Breast epithelium (tissue), 4 donors: ENCODE measurements at regions of chr11 and their contacts with region 1.

Region 1: GRCh38 chr11:132685174-132685611 is 847.1 kb downstream of the OPCML start:
- DNase-seq: no peak
- H3K4me3 ChIP-seq: no peak overlapping the region
- H3K27ac ChIP-seq: no peak overlapping the region
- H3K4me1 ChIP-seq: no peaks in the 10 kb centered on the region
- H3K27me3 ChIP-seq: no peaks in the 10 kb centered on the region
- CTCF ChIP-seq: no peak
- POLR2A ChIP-seq: no peak

Region 2: DNA sequence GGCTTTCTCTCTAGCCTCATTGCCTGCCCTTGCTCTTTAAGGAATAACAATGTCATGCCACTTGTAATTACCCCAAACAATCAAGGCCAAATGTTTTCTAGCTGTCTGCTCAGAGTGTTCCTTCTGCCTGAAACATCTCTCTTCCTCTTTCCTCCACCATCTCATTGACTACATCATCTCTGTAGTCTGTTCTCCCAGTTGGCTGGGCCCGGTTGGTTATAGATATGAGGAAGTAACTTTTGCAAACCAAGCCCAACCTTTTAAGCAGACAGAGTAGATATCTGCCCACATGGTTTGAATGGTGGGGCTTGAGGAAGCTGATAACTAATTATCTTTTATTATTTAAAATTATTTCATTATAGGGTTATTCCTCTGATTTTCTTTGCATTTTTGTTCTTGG is 1210.2 kb before region 1 on chr11:
- intact Hi-C with region 1: loop called (anchors 5 kb)
- DNase-seq: no peak
- H3K4me3 ChIP-seq: no peak overlapping the region
- H3K27ac ChIP-seq: no peak overlapping the region
- H3K4me1 ChIP-seq: no peaks in the 10 kb centered on the region
- H3K27me3 ChIP-seq: peaks cover 0 to 9% of the 10 kb centered on the region in 2 donors
- CTCF ChIP-seq: no peak
- POLR2A ChIP-seq: no peak